ENCODE measurements at regions of chrX and their contacts with region 1.

Region 1: DNA sequence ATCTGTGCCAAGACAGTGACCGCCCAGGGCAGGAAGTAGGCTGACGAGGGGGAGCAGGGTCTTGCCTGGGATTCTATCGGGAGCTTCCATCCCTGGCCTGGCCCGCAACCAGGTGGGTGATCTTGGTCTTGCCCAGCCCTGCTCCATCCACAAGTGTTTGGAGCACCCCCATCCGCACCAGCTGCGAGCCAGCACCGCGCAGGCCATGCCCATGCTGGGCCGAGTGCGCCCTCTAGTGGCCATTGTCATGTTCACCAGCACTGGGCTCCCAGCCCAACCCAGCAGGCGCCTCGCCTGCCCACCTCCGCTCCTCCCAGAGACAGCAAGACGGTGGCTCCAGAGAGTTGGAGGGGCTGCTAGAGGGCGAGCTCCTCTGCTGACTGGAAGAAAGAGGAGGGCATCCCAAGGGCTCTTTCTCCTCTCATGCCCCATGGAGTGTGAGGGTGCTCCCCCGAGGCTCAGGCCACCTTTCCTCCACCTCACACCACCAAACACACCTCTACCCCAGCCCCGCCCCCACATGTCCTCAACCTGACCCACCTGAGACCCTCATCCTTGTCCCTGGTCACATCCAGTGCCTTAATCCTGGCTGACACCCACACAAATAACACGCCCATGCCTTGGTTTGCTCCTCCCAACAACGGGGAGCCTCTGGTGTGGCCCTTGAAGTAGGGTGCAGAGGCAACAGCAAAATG is 9.8 kb upstream of the ATP2B3 start:
- DNase-seq: peak; percentile 86
- H3K4me3 Mint-ChIP-seq: no peak overlapping the region
- H3K27ac Mint-ChIP-seq: no peak overlapping the region
- H3K4me1 Mint-ChIP-seq: peaks cover 10% of the 10 kb centered on the region
- H3K27me3 Mint-ChIP-seq: no peaks in the 10 kb centered on the region

Region 2: DNA sequence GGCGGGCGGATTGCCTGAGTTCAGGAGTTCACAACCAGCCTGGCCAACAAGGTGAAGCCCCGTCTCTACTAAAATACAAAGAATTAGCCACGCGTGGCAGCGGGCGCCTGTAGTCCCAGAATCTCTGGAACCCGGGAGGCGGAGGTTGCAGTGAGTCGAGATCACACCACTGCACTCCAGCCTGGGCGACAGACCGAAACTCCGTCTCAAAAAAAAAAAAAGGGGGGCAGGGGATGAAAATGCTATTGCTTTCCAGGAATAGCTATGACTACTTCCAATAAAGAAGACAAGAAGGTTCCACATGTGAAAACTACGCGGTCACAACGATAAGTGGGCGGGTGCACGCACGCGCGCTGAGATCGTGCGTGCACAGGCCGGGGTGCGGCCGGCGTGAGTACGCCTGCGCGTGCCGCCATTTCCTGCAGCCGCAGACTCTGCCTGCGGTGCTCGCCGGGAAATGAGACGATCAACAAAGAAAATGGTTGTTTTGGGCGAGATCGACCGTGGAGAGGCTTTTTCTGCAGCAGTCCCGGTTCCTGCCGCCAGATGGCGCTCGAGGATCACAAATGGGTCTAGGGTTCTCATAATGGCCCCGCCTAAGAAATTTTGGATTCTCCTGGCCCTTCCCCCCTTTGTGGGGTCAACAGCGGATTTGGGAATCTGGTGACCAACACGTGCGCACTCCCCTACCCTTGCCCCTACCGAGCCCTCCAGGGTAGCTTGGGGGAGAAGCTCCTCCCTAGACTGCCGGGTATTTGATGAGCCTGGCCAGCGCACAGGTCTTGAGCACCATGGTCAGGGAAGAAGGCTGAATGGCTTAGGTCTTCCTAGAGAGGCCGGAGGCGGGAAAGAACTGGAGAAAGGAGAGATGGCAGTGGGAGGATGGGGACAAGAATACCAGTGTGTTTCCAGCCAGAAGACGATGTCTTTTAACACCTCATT is 548.8 kb before region 1 on chrX:
- CTCF ChIA-PET with region 1: interaction called, 6 read pairs
- POLR2A ChIA-PET with region 1: no interaction called
- intact Hi-C with region 1: loop called (anchors 1 kb)
- DNase-seq: peak; percentile 93
- H3K4me3 Mint-ChIP-seq: peak overlapping the region; percentile 51
- H3K27ac Mint-ChIP-seq: peak overlapping the region; percentile 87
- H3K4me1 Mint-ChIP-seq: peaks cover 6% of the 10 kb centered on the region
- H3K27me3 Mint-ChIP-seq: no peaks in the 10 kb centered on the region

Region 3: DNA sequence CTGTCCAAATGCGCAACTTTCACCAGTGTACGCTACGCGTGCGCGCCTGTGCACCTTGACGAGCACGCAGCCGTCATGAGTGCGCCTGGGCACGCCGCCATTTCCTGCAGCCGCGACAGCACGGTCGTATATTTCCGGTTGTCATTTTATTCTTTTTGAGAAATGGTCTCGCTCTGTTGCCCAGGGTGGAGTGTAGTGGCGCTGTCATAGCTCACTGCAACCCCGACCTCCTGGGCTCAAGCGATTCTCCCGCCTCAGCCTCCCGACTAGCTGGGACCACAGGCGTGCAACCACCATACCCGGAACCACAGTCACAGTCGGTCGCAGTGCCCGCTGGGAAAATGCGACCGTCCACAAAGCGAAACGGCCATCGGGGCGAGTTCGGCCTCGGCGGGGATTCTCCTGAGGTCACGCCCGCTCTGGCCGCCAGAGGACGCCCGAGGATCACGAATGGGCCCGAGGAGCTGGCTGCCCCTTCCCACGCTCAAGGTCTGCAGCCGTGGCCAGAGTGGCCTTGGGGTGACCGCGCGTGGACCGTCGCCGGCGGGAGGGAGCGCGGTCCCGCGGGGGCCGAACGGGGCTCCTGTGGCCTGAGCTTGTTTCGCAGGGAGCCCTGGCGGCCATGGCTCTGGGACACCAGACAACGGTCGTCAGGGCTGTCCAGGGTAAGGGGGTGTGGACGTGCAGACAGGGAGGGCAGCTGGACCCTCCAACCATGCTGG is 475.1 kb before region 1 on chrX:
- CTCF ChIA-PET with region 1: interaction called, 10 read pairs
- POLR2A ChIA-PET with region 1: no interaction called
- intact Hi-C with region 1: no loop called
- DNase-seq: peak; percentile 81
- H3K4me3 Mint-ChIP-seq: peak overlapping the region; percentile 81
- H3K27ac Mint-ChIP-seq: peak overlapping the region; percentile 92
- H3K4me1 Mint-ChIP-seq: peaks cover 9% of the 10 kb centered on the region
- H3K27me3 Mint-ChIP-seq: no peaks in the 10 kb centered on the region

Region 4: GRCh38 chrX:153200462-153200861 is 307.2 kb before region 1 on chrX:
- CTCF ChIA-PET with region 1: no interaction called
- POLR2A ChIA-PET with region 1: no interaction called
- intact Hi-C with region 1: no loop called
- DNase-seq: no peak
- H3K4me3 Mint-ChIP-seq: no peak overlapping the region
- H3K27ac Mint-ChIP-seq: no peak overlapping the region
- H3K4me1 Mint-ChIP-seq: no peaks in the 10 kb centered on the region
- H3K27me3 Mint-ChIP-seq: peaks cover 7% of the 10 kb centered on the region

Region 5: DNA sequence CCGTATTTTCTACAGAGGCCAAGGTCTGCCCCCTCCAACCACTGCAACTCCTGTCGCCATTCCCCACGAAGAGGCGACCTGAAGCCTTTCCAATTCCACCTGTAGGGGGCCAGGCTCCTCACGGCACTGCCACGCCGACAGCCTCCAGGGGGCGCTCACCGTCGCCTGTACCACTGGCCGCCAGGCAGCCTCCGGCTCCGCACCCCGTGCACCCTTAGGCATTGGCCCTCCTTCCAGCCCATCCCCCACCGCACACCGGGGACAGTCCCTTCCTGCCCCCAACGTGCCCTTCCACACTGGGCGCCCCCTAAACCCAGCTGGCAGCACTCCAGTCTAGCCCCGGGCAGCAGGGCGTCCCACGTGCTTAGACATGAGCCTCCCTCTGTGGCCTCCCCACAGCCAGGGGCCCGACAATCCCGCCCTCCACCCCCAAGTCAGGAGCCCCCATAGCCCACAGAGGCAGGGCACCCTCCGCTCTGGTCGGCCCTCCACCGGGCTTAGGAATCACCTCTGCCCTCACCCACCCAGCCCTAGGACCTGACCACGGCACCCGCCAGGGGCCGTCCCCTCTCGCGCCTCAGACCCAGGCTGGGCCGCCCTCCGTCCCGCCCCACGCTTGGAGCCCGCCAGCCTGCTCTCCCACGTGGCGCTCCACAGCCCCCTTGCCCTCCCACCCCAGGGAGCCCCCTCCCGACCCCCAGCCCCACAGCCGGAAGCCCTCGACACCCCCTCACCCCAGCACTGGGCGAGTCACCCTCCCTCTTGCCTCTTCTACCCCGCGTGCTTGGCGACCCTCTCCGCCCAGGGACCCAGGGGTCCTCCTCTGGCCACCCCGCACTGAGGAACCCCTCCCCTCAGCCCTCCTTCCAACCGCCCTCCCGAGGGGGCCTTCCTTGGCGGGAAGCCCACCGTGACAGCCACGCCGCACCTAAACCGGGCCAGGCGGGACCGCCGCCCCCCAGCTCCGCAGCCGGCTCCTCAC is 107.2 kb before region 1 on chrX:
- CTCF ChIA-PET with region 1: no interaction called
- POLR2A ChIA-PET with region 1: no interaction called
- intact Hi-C with region 1: loop called (anchors 5 kb)
- DNase-seq: peak; percentile 70
- H3K4me3 Mint-ChIP-seq: no peak overlapping the region
- H3K27ac Mint-ChIP-seq: no peak overlapping the region
- H3K4me1 Mint-ChIP-seq: peaks cover 3% of the 10 kb centered on the region
- H3K27me3 Mint-ChIP-seq: no peaks in the 10 kb centered on the region

Region 6: GRCh38 chrX:153460845-153461244 is 46.8 kb before region 1 on chrX:
- CTCF ChIA-PET with region 1: interaction called, 17 read pairs
- POLR2A ChIA-PET with region 1: no interaction called
- intact Hi-C with region 1: no loop called
- DNase-seq: peak; percentile 54
- H3K4me3 Mint-ChIP-seq: no peak overlapping the region
- H3K27ac Mint-ChIP-seq: no peak overlapping the region
- H3K4me1 Mint-ChIP-seq: no peaks in the 10 kb centered on the region
- H3K27me3 Mint-ChIP-seq: no peaks in the 10 kb centered on the region